Endothelial cell of umbilical vein (primary cell): ENCODE measurements at regions of chr6 and their contacts with region 1.

Region 1: GRCh38 chr6:45922728-45923351 is 92.8 kb downstream of the CLIC5 start:
- DNase-seq: peak; percentile 40
- H3K4me3 ChIP-seq: no peak overlapping the region
- H3K27ac ChIP-seq: no peak overlapping the region
- H3K4me1 ChIP-seq: no peaks in the 10 kb centered on the region
- H3K27me3 ChIP-seq: peaks cover 0 to 4% of the 10 kb centered on the region in 2 experiments
- CTCF ChIP-seq: peak; percentile 56 to 68
- POLR2A ChIP-seq: no peak

Region 2: GRCh38 chr6:44470746-44471145 is 1452.1 kb before region 1 on chr6:
- CTCF ChIA-PET with region 1: interaction called, 77 read pairs
- POLR2A ChIA-PET with region 1: no interaction called
- dilution Hi-C with region 1: no loop called
- intact Hi-C with region 1: loop called (anchors 2 kb)
- DNase-seq: no peak
- H3K4me3 ChIP-seq: no peak overlapping the region
- H3K27ac ChIP-seq: no peak overlapping the region
- H3K4me1 ChIP-seq: no peaks in the 10 kb centered on the region
- H3K27me3 ChIP-seq: peaks cover 0 to 6% of the 10 kb centered on the region in 2 experiments
- CTCF ChIP-seq: no peak
- POLR2A ChIP-seq: no peak

Region 3: GRCh38 chr6:44593539-44593944 is 1329.3 kb before region 1 on chr6:
- CTCF ChIA-PET with region 1: interaction called, 52 read pairs
- POLR2A ChIA-PET with region 1: no interaction called
- dilution Hi-C with region 1: no loop called
- intact Hi-C with region 1: loop called (anchors 1 kb)
- DNase-seq: peak; percentile 54
- H3K4me3 ChIP-seq: no peak overlapping the region
- H3K27ac ChIP-seq: no peak overlapping the region
- H3K4me1 ChIP-seq: no peaks in the 10 kb centered on the region
- H3K27me3 ChIP-seq: peaks cover 0 to 3% of the 10 kb centered on the region in 2 experiments
- CTCF ChIP-seq: peak; percentile 47 to 54
- POLR2A ChIP-seq: no peak

Region 4: GRCh38 chr6:44630125-44631028 is 1292.5 kb before region 1 on chr6:
- CTCF ChIA-PET with region 1: interaction called, 66 read pairs
- POLR2A ChIA-PET with region 1: no interaction called
- dilution Hi-C with region 1: no loop called
- intact Hi-C with region 1: loop called (anchors 1 kb)
- DNase-seq: peak; percentile 19
- H3K4me3 ChIP-seq: no peak overlapping the region
- H3K27ac ChIP-seq: no peak overlapping the region
- H3K4me1 ChIP-seq: no peaks in the 10 kb centered on the region
- H3K27me3 ChIP-seq: peaks cover 3 to 4% of the 10 kb centered on the region in 2 experiments
- CTCF ChIP-seq: peak; percentile 13 to 63
- POLR2A ChIP-seq: no peak

Region 5: DNA sequence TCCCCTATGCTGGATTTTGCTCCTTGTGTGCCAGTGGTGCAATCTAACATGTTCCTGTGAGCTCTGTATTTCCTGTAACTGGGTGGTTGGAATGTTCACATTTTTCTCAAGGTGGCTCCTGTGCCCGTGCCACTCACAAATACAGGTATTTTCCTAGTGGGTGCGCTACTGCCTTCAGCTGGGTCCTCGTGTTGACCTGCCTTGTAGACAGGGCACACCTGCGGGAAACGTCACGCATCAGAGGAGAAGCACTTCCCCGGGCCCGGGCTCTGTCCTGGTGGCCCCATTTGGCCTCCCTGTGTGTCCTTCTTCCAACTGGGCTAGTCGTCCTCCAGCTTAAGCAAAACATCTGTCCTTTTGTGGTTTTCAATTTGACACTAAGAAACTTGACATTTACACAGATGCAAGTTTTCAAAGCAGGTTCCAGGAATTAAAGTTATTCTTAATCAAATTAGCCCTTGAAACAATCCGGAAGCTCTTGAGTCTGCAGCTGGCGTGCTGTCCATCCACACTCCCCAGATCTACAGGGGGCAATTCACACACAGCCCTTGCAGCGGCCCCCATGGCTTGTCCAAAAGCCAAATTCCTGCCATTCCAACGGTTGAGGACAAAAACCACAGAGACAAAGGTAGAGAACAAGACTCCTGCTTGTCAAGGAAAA is 1260.2 kb before region 1 on chr6:
- CTCF ChIA-PET with region 1: interaction called, 302 read pairs
- POLR2A ChIA-PET with region 1: no interaction called
- dilution Hi-C with region 1: no loop called
- intact Hi-C with region 1: no loop called
- DNase-seq: no peak
- H3K4me3 ChIP-seq: no peak overlapping the region
- H3K27ac ChIP-seq: no peak overlapping the region
- H3K4me1 ChIP-seq: no peaks in the 10 kb centered on the region
- H3K27me3 ChIP-seq: peaks cover 2 to 12% of the 10 kb centered on the region in 2 experiments
- CTCF ChIP-seq: no peak
- POLR2A ChIP-seq: no peak

Region 6: GRCh38 chr6:45075246-45075645 is 847.6 kb before region 1 on chr6:
- CTCF ChIA-PET with region 1: no interaction called
- POLR2A ChIA-PET with region 1: no interaction called
- dilution Hi-C with region 1: no loop called
- intact Hi-C with region 1: loop called (anchors 5 kb)
- DNase-seq: peak; percentile 73
- H3K4me3 ChIP-seq: no peak overlapping the region
- H3K27ac ChIP-seq: peak overlapping the region; percentile 60
- H3K4me1 ChIP-seq: peaks cover 23% of the 10 kb centered on the region
- H3K27me3 ChIP-seq: no peaks in the 10 kb centered on the region
- CTCF ChIP-seq: no peak
- POLR2A ChIP-seq: no peak

Region 7: GRCh38 chr6:45900808-45901752 is 21.8 kb before region 1 on chr6:
- CTCF ChIA-PET with region 1: no interaction called
- POLR2A ChIA-PET with region 1: no interaction called
- dilution Hi-C with region 1: no loop called
- intact Hi-C with region 1: no loop called
- DNase-seq: no peak
- H3K4me3 ChIP-seq: no peak overlapping the region
- H3K27ac ChIP-seq: no peak overlapping the region
- H3K4me1 ChIP-seq: no peaks in the 10 kb centered on the region
- H3K27me3 ChIP-seq: peaks cover 0 to 2% of the 10 kb centered on the region in 2 experiments
- CTCF ChIP-seq: no peak
- POLR2A ChIP-seq: no peak

Region 8: DNA sequence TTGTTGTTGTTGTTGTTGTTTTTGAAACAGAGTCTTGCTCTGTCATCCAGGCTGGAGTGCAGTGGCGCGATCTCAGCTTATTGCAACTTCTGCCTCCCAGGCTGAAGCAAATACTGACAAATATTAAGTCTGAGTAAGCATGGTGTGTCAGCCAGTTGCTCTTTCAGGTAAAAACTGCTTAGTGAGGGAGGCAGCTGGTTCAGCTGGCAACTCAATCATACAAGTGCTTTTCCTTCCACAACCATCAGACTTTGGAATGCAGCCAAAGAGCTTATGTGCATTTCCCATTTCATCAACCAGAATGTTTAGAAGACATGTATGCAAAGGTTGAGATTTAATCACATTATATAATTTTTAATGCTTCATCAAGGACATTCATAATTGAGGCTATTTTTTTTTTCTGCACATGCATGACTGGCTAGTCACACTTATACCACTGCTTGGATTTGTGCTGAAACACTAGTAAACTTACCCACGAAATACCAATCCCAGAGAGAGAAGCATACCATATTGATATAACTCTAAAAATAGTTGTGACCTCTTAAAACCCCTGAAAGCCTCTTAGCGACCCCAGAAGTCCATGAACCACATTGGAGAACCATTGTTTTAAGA is 36.8 kb after region 1 on chr6:
- CTCF ChIA-PET with region 1: no interaction called
- POLR2A ChIA-PET with region 1: no interaction called
- dilution Hi-C with region 1: no loop called
- intact Hi-C with region 1: no loop called
- DNase-seq: peak; percentile 7
- H3K4me3 ChIP-seq: no peak overlapping the region
- H3K27ac ChIP-seq: no peak overlapping the region
- H3K4me1 ChIP-seq: no peaks in the 10 kb centered on the region
- H3K27me3 ChIP-seq: no peaks in the 10 kb centered on the region
- CTCF ChIP-seq: no peak
- POLR2A ChIP-seq: no peak